T-cell (primary cell): ENCODE measurements at regions of chr11 and their contacts with region 1.

Region 1: GRCh38 chr11:73271936-73272719 is at the start of gene P2RY6:
- DNase-seq: peak in 1 of 35 experiments; percentile 23
- ATAC-seq: no peak
- H3K4me3 ChIP-seq: no peak within 1 kb of the TSS
- H3K4me3 Mint-ChIP-seq: no peak within 1 kb of the TSS
- H3K27ac ChIP-seq: no peak within 1 kb of the TSS
- H3K27ac Mint-ChIP-seq: no peak within 1 kb of the TSS
- H3K4me1 ChIP-seq: no peaks in the 10 kb centered on the region
- H3K4me1 Mint-ChIP-seq: no peaks in the 10 kb centered on the region
- H3K27me3 ChIP-seq: peaks cover 0 to 31% of the 10 kb centered on the region in 2 experiments
- H3K27me3 Mint-ChIP-seq: peaks cover 4 to 18% of the 10 kb centered on the region in 2 donors
- total RNA-seq, gene P2RY6: 1.4 TPM in 1 of 5 donors, not detected in the others

Region 2: DNA sequence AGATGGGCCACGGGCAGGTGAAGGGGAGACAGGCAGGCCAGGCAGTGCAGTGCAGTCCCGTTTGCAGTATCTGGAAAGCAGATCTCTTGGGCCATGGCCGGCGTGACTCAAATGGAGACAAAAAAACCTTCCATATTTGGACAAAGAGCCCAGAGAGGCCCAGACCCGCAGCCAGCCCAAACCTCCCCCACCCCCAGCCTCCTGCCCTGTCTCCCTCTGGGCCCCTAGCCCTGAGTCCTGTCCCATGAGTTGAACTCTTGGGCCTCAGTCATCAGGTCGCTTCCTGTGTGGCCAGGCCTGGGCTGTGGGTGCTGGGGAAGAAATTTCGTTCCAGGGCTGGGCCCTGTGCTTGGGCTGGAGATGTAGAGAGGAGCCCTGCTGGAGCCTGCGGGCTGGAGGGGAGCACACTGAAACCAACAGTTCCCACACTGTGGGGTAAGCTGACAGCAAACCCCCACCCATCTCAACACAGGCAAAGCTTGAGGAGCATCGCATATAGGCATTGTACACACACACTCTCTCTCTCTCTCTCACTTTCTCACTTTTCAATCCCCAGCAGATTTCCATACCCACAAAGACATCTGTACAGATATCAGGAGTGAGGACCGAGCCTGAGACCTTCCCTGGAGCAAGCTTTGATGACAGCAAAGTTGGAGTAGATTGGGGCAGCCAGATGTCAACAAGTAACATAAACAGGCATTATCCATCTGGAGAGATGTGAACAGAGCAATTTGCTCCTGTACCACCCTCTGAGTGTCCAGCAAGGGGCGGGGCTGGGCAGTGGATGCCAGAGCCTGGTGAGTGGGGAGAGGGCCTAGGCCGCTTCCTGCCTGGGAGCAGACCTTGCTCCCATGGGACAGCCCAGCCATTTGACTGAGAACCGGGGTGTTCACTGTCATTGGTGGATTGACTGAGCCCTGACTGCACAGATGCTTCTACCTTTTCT is 53.2 kb after region 1 on chr11:
- CTCF ChIA-PET with region 1: interaction called in 1 of 2 experiments, 13 read pairs
- POLR2A ChIA-PET with region 1: no interaction called
- DNase-seq: no peak
- ATAC-seq: no peak
- H3K4me3 ChIP-seq: no peak overlapping the region
- H3K4me3 Mint-ChIP-seq: no peak overlapping the region
- H3K27ac ChIP-seq: no peak overlapping the region
- H3K27ac Mint-ChIP-seq: no peak overlapping the region
- H3K4me1 ChIP-seq: peaks cover 0 to 7% of the 10 kb centered on the region in 2 experiments
- H3K4me1 Mint-ChIP-seq: peaks cover 6 to 10% (median 9%) of the 10 kb centered on the region in 3 donors
- H3K27me3 ChIP-seq: peaks cover 0 to 12% of the 10 kb centered on the region in 2 experiments
- H3K27me3 Mint-ChIP-seq: no peaks in the 10 kb centered on the region